ENCODE measurements at regions of chr15 and their contacts with region 1.

Region 1: DNA sequence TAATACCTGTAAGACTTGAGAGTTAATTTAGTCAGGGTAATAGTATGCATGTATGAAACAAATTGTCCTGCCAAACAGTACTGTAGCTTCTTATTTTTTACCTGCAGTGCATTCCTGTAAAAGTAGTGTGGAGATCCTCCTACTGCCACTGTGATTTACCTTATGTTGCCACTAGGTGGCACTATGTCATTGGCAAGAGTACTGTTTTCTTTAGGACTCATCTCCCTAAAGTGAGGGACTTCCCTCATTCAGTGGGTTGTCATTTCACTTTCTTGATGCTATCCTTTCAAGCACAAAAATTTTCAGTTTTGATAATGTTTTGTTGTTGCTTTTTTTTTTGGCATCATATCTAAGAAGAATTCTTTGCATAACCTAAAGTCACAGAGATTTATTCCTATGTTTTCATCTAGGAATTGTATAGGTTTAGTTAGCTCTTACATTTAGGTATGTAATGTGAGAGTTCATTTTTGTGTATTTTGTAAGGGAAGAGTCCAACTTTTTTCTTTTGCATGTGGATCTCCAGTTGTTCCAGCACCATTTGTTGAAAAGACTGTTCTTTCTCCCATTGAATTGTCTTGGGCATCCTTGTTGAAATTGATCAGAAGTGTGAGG is 105.7 kb downstream of the AKAP13 start:
- DNase-seq: peak in 8 of 9 donors; percentile 50 to 73 (median 66)
- ATAC-seq: peak; percentile 96
- H3K4me3 ChIP-seq: no peak overlapping the region
- H3K4me3 Mint-ChIP-seq: no peak overlapping the region
- H3K27ac ChIP-seq: no peak overlapping the region
- H3K27ac Mint-ChIP-seq: peak overlapping the region in 4 of 9 donors; percentile 2 to 73 (median 56)
- H3K4me1 ChIP-seq: peaks cover 16 to 17% of the 10 kb centered on the region in 2 donors
- H3K4me1 Mint-ChIP-seq: peaks cover 45 to 84% (median 70%) of the 10 kb centered on the region in 7 donors
- H3K27me3 ChIP-seq: no peaks in the 10 kb centered on the region
- H3K27me3 Mint-ChIP-seq: no peaks in the 10 kb centered on the region

Region 2: DNA sequence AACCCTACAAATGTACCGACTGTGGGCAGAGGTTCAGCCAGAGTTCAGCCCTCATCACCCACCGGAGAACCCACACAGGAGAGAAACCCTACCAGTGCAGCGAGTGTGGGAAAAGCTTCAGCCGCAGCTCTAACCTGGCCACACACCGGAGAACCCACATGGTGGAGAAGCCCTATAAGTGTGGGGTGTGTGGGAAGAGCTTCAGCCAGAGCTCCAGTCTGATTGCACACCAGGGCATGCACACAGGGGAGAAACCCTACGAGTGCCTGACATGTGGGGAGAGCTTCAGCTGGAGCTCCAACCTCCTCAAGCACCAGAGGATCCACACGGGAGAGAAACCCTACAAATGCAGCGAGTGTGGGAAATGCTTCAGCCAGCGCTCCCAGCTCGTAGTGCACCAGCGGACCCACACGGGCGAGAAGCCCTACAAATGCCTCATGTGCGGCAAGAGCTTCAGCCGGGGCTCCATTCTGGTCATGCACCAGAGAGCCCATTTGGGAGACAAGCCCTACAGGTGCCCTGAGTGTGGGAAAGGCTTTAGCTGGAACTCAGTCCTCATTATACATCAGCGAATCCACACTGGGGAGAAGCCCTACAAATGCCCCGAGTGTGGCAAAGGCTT is 864.6 kb before region 1 on chr15:
- CTCF ChIA-PET with region 1: no interaction called
- POLR2A ChIA-PET with region 1: no interaction called
- intact Hi-C with region 1: loop called in 1 of 2 experiments (anchors 5 kb)
- DNase-seq: no peak
- ATAC-seq: no peak
- H3K4me3 ChIP-seq: no peak overlapping the region
- H3K4me3 Mint-ChIP-seq: no peak overlapping the region
- H3K27ac ChIP-seq: no peak overlapping the region
- H3K27ac Mint-ChIP-seq: no peak overlapping the region
- H3K4me1 ChIP-seq: no peaks in the 10 kb centered on the region
- H3K4me1 Mint-ChIP-seq: peaks cover 0 to 3% (median 1%) of the 10 kb centered on the region in 7 donors
- H3K27me3 ChIP-seq: no peaks in the 10 kb centered on the region
- H3K27me3 Mint-ChIP-seq: no peaks in the 10 kb centered on the region

Region 3: DNA sequence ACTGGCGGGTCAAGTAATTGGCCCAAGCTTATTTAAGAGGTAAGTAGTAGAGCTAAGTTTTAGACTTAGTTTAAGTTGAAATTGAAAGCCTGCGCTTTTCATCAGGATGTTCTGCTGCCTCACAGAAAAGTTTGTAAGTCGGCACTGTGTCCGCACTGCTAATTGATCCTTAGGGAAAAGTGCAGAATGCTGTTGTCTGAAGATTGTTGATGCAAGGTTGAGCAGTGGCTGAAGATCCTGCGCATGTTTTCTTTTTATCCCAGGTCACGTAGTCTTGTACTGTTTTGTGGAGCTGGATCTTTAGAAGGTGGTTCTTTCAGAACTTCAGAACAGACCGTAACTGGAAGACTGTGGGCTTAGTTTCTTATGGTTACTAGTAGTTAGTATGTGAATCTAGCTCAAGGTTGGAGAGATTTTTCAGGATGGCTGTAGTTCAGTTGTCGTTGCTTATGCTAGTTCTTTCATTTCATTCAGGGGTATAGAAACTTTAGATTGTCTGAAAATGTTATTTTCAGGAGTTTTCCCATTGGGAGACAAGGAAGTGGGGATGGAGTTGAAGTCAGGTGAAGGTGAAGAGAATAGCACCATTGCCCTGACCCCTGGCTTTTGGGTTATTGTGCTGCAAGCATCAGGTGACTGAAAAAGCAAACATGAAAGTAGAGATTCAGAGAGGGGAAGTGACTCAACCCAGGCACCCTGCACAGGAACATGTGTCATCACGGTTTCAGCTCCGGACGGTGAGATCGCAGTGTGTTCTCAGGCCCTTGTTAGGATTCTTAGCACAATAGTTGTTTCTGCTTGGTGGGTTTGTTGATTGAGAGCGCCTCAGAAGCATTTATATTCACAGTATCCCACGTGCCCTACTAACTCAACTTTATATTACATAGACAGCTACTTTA is 72.9 kb before region 1 on chr15:
- CTCF ChIA-PET with region 1: interaction called, 3 read pairs
- POLR2A ChIA-PET with region 1: no interaction called
- intact Hi-C with region 1: loop called in 1 of 2 experiments (anchors 5 kb)
- DNase-seq: peak; percentile 21 to 68 (median 43)
- ATAC-seq: peak; percentile 96
- H3K4me3 ChIP-seq: no peak overlapping the region
- H3K4me3 Mint-ChIP-seq: peak overlapping the region; percentile 18 to 81 (median 72)
- H3K27ac ChIP-seq: peak overlapping the region; percentile 47
- H3K27ac Mint-ChIP-seq: peak overlapping the region; percentile 71 to 91 (median 87)
- H3K4me1 ChIP-seq: peaks cover 26 to 29% of the 10 kb centered on the region in 2 donors
- H3K4me1 Mint-ChIP-seq: peaks cover 29 to 76% (median 63%) of the 10 kb centered on the region in 7 donors
- H3K27me3 ChIP-seq: no peaks in the 10 kb centered on the region
- H3K27me3 Mint-ChIP-seq: no peaks in the 10 kb centered on the region

Region 4: DNA sequence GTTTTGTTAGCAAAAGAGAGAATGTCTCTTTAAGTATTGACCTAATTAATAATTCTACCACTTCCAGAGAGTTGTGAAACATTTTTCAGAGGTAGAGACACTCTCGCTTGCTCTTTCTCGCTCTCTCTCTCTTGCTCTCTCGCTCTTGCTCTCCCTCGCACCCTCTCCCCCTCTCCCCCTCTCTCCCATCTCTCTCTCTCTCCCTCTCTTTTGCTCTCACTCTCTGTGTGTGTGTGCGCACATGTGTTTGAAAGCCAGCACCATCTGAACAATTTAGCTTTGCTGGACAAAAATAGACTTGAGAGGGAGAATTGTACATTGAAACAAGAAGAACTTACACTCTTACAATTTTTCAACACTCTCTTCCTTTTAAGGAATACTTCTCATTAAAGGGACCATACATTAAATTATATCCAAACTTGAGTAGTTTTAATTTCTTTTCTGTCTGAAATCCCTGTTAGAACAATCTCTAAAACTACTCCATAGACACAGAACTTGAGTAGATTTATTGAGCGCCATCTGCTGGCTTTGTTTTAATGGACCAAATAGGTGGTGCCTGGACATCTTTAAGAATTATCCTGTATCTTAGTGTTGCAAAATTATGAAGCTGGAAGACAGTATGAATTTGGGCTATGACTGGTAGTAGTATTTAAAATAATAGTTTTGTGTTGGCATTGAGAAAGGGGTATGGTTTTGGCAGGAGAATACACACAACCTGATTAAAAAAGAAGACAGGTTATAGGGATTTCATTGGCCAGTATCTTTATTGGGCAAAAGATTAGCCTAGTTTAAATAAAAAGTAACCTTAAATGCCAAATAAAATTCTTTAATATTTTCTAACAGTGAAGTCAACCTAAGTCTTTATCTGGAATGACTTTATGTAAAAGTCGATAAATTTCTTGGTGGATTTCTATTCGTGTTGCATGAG is 19.0 kb after region 1 on chr15:
- CTCF ChIA-PET with region 1: interaction called, 8 read pairs
- POLR2A ChIA-PET with region 1: no interaction called
- intact Hi-C with region 1: loop called in 1 of 2 experiments (anchors 1 kb)
- DNase-seq: peak in 7 of 9 donors; percentile 7 to 51 (median 37)
- ATAC-seq: peak; percentile 66
- H3K4me3 ChIP-seq: no peak overlapping the region
- H3K4me3 Mint-ChIP-seq: peak overlapping the region in 1 of 10 donors; percentile 20
- H3K27ac ChIP-seq: no peak overlapping the region
- H3K27ac Mint-ChIP-seq: peak overlapping the region in 3 of 9 donors; percentile 13 to 30 (median 22)
- H3K4me1 ChIP-seq: peaks cover 11 to 13% of the 10 kb centered on the region in 2 donors
- H3K4me1 Mint-ChIP-seq: peaks cover 26 to 90% (median 71%) of the 10 kb centered on the region in 7 donors
- H3K27me3 ChIP-seq: no peaks in the 10 kb centered on the region
- H3K27me3 Mint-ChIP-seq: no peaks in the 10 kb centered on the region

Region 5: GRCh38 chr15:85730001-85730820 is 244.1 kb after region 1 on chr15:
- CTCF ChIA-PET with region 1: no interaction called
- POLR2A ChIA-PET with region 1: no interaction called
- intact Hi-C with region 1: loop called in 1 of 2 experiments (anchors 1 kb)
- DNase-seq: peak in 7 of 9 donors; percentile 48 to 72 (median 62)
- ATAC-seq: peak; percentile 90
- H3K4me3 ChIP-seq: no peak overlapping the region
- H3K4me3 Mint-ChIP-seq: no peak overlapping the region
- H3K27ac ChIP-seq: no peak overlapping the region
- H3K27ac Mint-ChIP-seq: peak overlapping the region; percentile 7 to 88 (median 47)
- H3K4me1 ChIP-seq: no peaks in the 10 kb centered on the region
- H3K4me1 Mint-ChIP-seq: peaks cover 0 to 28% (median 14%) of the 10 kb centered on the region in 7 donors
- H3K27me3 ChIP-seq: no peaks in the 10 kb centered on the region
- H3K27me3 Mint-ChIP-seq: no peaks in the 10 kb centered on the region

Region 6: DNA sequence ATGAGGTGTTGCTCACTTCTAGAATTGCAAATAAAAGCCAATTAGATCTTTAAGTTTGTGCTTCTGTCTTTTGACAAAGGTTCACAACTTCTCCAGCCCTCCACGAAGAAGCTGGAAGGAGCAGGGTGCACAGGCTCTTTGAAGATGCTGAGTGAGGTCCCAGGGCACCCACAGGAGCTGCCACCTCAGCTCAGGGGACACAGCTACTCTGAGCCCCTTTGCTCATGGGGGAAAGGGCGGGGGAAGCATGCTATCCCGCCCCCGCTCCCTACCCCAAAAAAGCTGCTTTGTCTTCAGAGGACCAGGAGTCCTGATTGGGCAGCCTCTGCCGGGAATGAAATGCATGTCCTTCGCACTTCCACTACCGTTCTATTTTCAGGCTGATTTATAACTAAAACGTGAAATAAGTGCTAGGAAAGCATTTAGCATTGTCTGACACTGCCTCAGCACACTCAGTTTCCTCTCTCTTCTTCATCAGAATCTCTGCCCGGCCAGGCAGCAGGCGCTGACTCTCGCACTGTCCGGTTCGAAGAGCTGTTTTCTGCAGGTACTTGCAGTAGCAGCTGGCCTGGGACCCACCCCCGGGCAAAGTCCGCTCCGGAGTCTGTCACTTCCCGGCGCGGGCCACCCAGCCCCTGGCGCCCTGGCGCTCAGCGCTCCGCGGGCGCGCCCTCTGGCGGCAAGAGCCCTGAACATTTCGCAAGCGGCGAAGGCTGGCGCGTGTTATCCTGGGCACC is 354.2 kb after region 1 on chr15:
- CTCF ChIA-PET with region 1: no interaction called
- POLR2A ChIA-PET with region 1: no interaction called
- intact Hi-C with region 1: loop called (anchors 1 kb)
- DNase-seq: peak; percentile 55 to 87 (median 75)
- ATAC-seq: peak; percentile 95
- H3K4me3 ChIP-seq: peak overlapping the region; percentile 36
- H3K4me3 Mint-ChIP-seq: peak overlapping the region; percentile 34 to 82 (median 71)
- H3K27ac ChIP-seq: no peak overlapping the region
- H3K27ac Mint-ChIP-seq: peak overlapping the region in 1 of 9 donors; percentile 36
- H3K4me1 ChIP-seq: peaks cover 0 to 3% of the 10 kb centered on the region in 2 donors
- H3K4me1 Mint-ChIP-seq: peaks cover 2 to 9% (median 6%) of the 10 kb centered on the region in 7 donors
- H3K27me3 ChIP-seq: no peaks in the 10 kb centered on the region
- H3K27me3 Mint-ChIP-seq: peaks cover 0 to 9% (median 6%) of the 10 kb centered on the region in 5 donors

Region 7: DNA sequence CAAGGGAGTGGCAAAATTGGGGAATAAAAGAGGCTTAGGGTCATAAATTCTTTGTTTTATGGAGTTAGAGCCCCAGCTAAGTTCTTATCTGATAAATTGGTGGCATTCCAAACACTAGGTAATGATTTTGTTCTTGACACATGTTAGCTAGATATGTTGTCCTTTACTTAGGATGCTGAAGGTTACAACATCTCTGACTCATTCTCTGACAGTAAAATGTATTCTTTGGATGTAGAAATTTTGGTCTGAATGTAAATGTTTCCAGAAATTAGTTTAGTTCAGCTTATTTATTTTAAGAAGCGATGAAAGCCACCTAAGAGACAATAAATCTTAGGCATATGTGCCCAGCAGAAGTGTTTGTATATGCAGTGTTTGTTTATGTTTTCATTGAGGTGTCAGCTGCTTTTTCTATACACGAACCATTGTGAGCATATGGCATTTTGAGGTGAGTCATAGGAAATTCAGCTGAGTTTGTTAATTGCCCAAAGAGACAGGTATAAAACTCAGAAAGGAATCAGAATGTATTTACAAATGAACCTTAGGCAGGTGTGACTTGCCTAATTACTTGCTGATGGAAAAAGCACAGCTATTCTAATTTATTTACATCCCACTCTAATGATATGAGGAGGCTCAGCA is 841.3 kb after region 1 on chr15:
- CTCF ChIA-PET with region 1: no interaction called
- POLR2A ChIA-PET with region 1: no interaction called
- intact Hi-C with region 1: no loop called
- DNase-seq: no peak
- ATAC-seq: no peak
- H3K4me3 ChIP-seq: no peak overlapping the region
- H3K4me3 Mint-ChIP-seq: no peak overlapping the region
- H3K27ac ChIP-seq: no peak overlapping the region
- H3K27ac Mint-ChIP-seq: no peak overlapping the region
- H3K4me1 ChIP-seq: no peaks in the 10 kb centered on the region
- H3K4me1 Mint-ChIP-seq: no peaks in the 10 kb centered on the region
- H3K27me3 ChIP-seq: no peaks in the 10 kb centered on the region
- H3K27me3 Mint-ChIP-seq: peaks cover 0 to 49% (median 37%) of the 10 kb centered on the region in 5 donors